AG04449 (cell line): ENCODE measurements at regions of chr9 and their contacts with region 1.

Region 1: GRCh38 chr9:88041447-88041846 is 67.1 kb upstream of the CDK20 start:
- DNase-seq: no peak
- H3K4me3 ChIP-seq: no peak overlapping the region
- CTCF ChIP-seq: peak; percentile 15

Region 2: DNA sequence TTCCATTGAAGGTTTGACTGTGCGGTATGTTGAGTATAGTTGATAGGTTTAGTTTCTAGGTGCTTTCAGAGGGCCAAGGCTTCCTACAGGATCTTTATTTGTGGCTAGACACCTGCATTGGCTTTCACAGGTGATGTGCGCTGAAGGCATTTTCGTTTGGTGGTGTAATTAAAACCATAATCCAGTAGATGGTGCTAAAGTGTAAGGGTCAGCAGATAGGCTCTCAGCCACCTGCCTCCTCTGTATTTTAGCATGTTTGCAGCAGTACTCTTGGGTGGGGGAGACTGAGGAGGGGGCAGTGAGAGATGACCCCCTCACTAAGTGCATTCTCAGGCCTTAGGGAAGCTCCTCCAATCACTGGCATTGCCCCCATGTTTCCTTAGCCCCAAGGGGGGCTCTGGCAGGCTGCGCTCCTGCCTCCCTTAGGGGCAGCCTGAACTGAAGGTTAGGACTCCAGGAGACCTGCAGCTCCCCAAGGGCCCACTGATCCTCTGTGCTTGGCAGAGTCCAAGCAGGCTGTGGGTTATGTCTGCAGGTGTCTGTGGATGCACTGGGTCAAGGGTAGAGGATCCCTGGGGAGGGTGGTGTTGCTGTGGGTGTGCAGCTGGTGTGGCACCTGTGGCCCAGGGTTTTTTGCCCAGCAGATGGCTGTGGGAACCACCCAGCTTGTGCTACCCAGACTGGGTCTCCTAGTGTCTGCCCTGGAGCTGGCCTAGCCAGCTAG is 90.5 kb before region 1 on chr9:
- CTCF ChIA-PET with region 1: interaction called, 10 read pairs
- POLR2A ChIA-PET with region 1: no interaction called
- DNase-seq: no peak
- H3K4me3 ChIP-seq: no peak overlapping the region
- CTCF ChIP-seq: peak; percentile 30

Region 3: DNA sequence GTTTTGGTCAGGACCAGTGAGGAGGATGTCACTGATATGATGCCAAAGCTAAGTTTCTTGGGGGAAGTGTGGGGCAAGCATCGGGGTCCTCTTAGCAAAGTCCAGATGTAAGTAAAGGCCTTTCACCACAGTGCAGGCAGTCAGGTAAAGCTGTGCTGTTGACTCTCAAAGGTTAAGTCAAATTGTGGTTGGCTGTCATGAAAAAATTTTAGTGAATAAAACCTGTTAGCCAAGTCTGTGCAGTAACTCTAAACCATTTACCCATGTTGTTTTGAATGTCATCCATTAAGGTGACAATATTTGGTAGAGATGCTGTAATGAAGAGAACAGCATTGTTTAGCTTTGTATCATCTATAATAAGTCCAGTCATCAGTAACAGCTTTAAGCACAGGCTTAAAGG is 79.9 kb before region 1 on chr9:
- CTCF ChIA-PET with region 1: no interaction called
- POLR2A ChIA-PET with region 1: no interaction called
- DNase-seq: no peak
- H3K4me3 ChIP-seq: no peak overlapping the region
- CTCF ChIP-seq: no peak

Region 4: GRCh38 chr9:88018101-88018500 is 23.3 kb before region 1 on chr9:
- CTCF ChIA-PET with region 1: no interaction called
- POLR2A ChIA-PET with region 1: no interaction called
- DNase-seq: no peak
- H3K4me3 ChIP-seq: no peak overlapping the region
- CTCF ChIP-seq: no peak